ENCODE measurements at regions of chr1 and their contacts with region 1.

Region 1: DNA sequence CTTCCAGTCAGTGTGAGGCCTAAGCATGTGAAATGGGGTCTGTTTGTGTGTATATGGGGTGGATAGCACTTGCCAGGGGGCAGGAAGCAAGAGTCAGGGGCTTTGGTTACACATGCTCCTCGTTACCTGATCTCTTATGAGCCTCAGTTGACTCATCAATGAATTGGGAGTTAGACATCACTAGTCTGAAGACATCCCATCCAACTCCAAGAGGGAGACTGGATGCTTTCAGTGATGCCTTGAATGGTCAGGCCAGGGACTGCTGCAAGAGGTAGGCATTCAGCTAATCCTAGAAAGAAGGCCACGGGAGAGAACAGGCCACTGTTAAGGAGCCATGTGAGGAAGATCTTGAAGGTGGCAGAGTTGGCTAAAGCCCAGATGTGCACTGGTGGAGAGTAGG is 6.3 kb downstream of the RAB25 start:
- DNase-seq: no peak
- H3K4me3 Mint-ChIP-seq: no peak overlapping the region
- H3K27ac Mint-ChIP-seq: no peak overlapping the region
- H3K4me1 Mint-ChIP-seq: peaks cover 12% of the 10 kb centered on the region
- H3K27me3 Mint-ChIP-seq: peaks cover 3% of the 10 kb centered on the region

Region 2: GRCh38 chr1:155934097-155934935 is 132.9 kb before region 1 on chr1 and contains the start of gene KHDC4:
- intact Hi-C with region 1: loop called (anchors 2 kb)
- DNase-seq: peak; percentile 96
- H3K4me3 Mint-ChIP-seq: no peak within 1 kb of the TSS
- H3K27ac Mint-ChIP-seq: peak within 1 kb of the TSS; percentile 58
- H3K4me1 Mint-ChIP-seq: peaks cover 28% of the 10 kb centered on the region
- H3K27me3 Mint-ChIP-seq: no peaks in the 10 kb centered on the region
- total RNA-seq, gene KHDC4: 78.4 and 83.5 TPM in 2 replicates

Region 3: DNA sequence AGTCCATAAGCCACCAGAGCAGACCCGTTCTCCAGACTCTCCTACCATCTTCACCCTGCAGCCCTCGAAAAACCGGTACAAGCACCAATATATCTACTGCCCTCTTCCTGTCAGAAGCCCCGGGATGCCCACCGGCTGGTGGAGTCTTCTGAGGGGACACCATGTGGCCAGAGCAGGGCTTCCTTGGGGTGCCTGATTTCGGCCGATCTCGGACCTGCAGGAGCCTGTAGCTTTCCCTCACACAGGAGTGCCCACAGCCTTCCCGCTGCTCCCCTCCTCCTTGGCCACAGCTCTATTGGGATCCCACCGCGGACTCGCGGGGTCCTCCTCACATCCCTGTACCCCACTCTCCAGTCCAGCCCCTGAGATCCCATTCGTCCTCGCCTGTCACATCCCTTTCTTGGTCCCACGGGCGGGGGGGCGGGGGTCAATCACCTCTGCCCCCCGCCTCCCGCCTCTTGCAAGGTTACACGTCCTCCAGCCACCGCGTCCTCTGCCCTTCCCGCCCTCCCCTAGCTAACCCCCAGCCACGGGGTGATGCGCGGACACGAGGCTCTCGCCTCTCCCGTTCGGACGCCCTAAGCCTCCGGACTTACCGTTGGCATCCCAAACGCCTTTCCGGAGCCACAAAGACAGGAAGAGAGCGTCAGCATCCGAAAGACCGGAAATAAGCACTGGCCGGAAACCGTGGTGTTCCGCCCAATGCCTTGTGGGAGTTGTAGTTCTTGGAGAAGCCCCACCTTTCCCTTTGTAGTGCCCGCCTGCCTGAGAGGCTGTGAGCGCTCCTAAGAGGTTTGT is 46.8 kb before region 1 on chr1 and contains the start of gene SSR2:
- intact Hi-C with region 1: loop called (anchors 2 kb)
- DNase-seq: peak; percentile 84
- H3K4me3 Mint-ChIP-seq: peak within 1 kb of the TSS; percentile 98
- H3K27ac Mint-ChIP-seq: peak within 1 kb of the TSS; percentile 90
- H3K4me1 Mint-ChIP-seq: peaks cover 19% of the 10 kb centered on the region
- H3K27me3 Mint-ChIP-seq: peaks cover 7% of the 10 kb centered on the region
- total RNA-seq, gene SSR2: 227 and 239 TPM in 2 replicates

Region 4: GRCh38 chr1:156025877-156026276 is 41.4 kb before region 1 on chr1:
- intact Hi-C with region 1: loop called (anchors 1 kb)
- DNase-seq: peak; percentile 28
- H3K4me3 Mint-ChIP-seq: no peak overlapping the region
- H3K27ac Mint-ChIP-seq: no peak overlapping the region
- H3K4me1 Mint-ChIP-seq: peaks cover 8% of the 10 kb centered on the region
- H3K27me3 Mint-ChIP-seq: peaks cover 7% of the 10 kb centered on the region